ENCODE measurements at regions of chr19 and their contacts with region 1.

Region 1: GRCh38 chr19:913080-913748 is at the start of gene R3HDM4:
- DNase-seq: peak; percentile 80
- H3K4me3 Mint-ChIP-seq: peak within 1 kb of the TSS; percentile 84
- H3K27ac Mint-ChIP-seq: peak within 1 kb of the TSS; percentile 80
- H3K4me1 Mint-ChIP-seq: peaks cover 19% of the 10 kb centered on the region
- H3K27me3 Mint-ChIP-seq: peaks cover 2% of the 10 kb centered on the region
- total RNA-seq, gene R3HDM4: 77.1 and 83.3 TPM in 2 replicates

Region 2: DNA sequence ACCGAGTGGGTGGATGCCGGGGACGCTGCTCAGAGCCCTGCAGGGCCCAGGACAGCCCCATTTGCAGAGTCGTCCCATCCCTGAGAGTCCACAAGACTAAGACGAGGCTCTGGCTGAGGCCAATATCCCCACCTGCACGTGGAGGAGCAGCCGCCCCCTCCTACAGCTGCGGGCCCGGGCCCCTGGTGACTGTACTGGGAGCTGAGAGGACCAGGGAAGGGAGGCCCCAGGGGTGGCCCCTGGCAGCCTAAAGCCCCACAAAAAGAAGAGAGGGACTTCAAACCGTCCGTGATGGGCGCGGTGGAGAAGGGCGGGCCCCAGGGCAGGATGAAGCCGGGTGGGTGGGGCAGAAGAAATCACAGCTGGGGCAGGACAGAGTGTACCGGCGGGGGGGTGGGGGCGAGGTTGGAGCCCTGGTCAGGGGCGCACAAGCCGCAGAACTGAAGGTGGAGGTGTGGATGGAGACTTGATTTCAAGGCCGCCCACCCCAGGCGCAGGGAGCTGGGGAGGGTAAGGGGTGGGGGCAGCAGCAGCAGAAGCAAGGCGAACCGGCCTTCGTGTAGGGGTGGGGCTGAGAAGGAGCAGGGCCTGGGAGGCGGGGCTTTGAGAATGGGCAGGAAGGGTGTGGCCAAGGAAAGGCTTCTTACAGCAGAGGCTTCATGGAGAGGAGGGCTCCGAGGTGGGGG is 40.8 kb before region 1 on chr19:
- intact Hi-C with region 1: no loop called
- DNase-seq: peak; percentile 87
- H3K4me3 Mint-ChIP-seq: peak overlapping the region; percentile 65
- H3K27ac Mint-ChIP-seq: peak overlapping the region; percentile 49
- H3K4me1 Mint-ChIP-seq: peaks cover 2% of the 10 kb centered on the region
- H3K27me3 Mint-ChIP-seq: no peaks in the 10 kb centered on the region

Region 3: DNA sequence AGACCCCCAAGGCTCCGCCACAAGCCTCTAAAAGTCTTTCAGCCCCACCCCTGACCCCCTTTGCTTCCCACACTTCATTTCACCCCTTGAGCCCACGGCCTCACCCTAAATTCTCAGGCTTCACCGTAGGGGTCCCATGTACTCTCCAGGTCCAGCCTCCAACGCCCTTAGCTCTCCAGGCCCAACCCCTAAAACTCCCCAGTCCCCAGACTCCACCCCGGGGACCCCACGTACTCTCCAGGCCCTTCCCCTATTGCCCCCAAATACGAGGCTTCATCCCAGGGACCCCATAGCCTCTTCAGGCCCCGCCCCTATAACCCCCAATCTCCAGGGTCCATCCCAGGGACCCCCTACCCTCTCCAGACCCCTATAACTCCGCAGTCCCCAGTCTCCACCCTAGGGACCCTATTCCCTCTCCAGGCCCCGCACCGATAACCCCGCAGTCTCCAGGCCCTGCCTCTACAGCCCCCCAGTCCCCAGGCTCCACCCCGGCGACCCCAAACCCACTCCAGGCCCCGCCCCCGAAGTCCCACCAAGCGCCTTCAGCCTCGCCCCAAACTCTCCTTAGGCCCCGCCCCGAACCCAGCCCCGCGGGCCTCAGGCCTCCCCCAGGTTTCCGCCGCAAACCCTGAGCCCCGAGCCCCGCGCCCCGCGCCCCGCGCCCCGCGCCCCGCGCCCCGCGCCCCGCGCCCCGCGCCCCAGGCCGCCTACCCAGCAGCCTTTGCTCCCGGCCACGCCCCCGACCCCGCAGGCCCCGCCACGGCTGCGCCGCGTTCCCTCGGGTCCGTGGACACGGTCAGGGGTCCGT is 20.8 kb before region 1 on chr19:
- intact Hi-C with region 1: loop called (anchors 2 kb)
- DNase-seq: no peak
- H3K4me3 Mint-ChIP-seq: peak overlapping the region; percentile 90
- H3K27ac Mint-ChIP-seq: peak overlapping the region; percentile 81
- H3K4me1 Mint-ChIP-seq: peaks cover 8% of the 10 kb centered on the region
- H3K27me3 Mint-ChIP-seq: no peaks in the 10 kb centered on the region

Measured in activated T-helper 2 cell treated with anti-CD3 and anti-CD28 coated beads, Interferon-gamma antibody, Interleukin-2, Interleukin-4, amounts not matched to agents 10 μg/mL and 5 μg/mL and 100 μg/mL, durations not matched to agents 14 hours and 24 hours and 36 hours (primary cell).